ENCODE measurements at regions of chr16 and their contacts with region 1.

Region 1: DNA sequence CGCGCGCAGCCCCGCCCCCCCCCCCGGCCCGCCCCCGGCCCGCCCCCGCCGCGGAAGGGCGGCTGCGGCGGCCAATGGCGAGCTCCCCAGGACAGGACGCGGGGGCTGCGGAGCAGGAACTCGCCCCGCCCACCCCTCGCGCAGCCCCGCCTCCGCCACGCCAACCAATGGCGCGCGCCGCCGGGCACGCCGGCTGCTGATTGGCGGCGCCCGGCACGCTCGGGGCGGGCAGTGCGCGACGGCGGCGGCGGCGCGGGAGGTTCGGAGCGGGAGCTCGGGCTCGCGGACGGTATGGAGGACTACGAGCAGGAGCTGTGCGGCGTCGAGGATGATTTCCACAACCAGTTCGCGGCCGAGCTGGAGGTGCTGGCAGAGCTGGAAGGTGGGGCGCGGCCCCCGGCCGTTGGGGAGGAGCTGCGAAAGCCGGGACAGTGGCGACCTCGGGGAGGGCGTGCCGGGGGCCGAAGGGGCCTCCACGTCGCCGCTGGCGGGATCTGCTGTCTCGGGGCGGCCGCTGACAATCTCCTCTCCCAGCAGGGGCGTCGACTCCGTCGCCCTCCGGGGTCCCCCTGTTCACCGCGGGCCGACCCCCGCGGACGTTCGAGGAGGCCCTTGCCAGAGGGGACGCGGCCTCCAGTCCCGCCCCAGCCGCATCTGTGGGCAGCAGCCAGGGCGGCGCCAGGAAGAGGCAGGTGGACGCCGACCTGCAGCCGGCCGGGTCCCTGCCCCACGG is at the start of gene CHTF18:
- DNase-seq: peak; percentile 87 to 99 (median 94)
- ATAC-seq: peak; percentile 93 to 98
- H3K4me3 Mint-ChIP-seq: peak within 1 kb of the TSS; percentile 78 to 89 (median 84)
- H3K27ac Mint-ChIP-seq: peak within 1 kb of the TSS in 9 of 10 donors; percentile 44 to 86 (median 72)
- H3K4me1 Mint-ChIP-seq: peaks cover 0 to 18% (median 6%) of the 10 kb centered on the region in 4 donors
- H3K27me3 Mint-ChIP-seq: no peaks in the 10 kb centered on the region
- polyA plus RNA-seq, gene CHTF18: 3.5 to 4.3 (median 4.0) TPM

Region 2: GRCh38 chr16:714558-715476 is 73.7 kb before region 1 on chr16 and contains the start of gene METRN:
- POLR2A ChIA-PET with region 1: interaction called, 21 read pairs
- DNase-seq: peak; percentile 79 to 95 (median 85)
- ATAC-seq: peak; percentile 85 to 89
- H3K4me3 Mint-ChIP-seq: peak within 1 kb of the TSS; percentile 19 to 83 (median 64)
- H3K27ac Mint-ChIP-seq: peak within 1 kb of the TSS in 2 of 10 donors; percentile 20 to 52
- H3K4me1 Mint-ChIP-seq: peaks cover 13 to 35% (median 26%) of the 10 kb centered on the region in 4 donors
- H3K27me3 Mint-ChIP-seq: peaks cover 0 to 14% (median 0%) of the 10 kb centered on the region in 5 donors
- polyA plus RNA-seq, gene METRN: 22.1 to 40.9 (median 35.8) TPM

Region 3: GRCh38 chr16:720990-721764 is 67.4 kb before region 1 on chr16 and contains the start of gene ANTKMT:
- POLR2A ChIA-PET with region 1: interaction called, 21 read pairs
- DNase-seq: peak; percentile 66 to 83 (median 78)
- ATAC-seq: peak; percentile 71
- H3K4me3 Mint-ChIP-seq: peak within 1 kb of the TSS; percentile 79 to 95 (median 87)
- H3K27ac Mint-ChIP-seq: peak within 1 kb of the TSS; percentile 69 to 96 (median 91)
- H3K4me1 Mint-ChIP-seq: peaks cover 25 to 51% (median 38%) of the 10 kb centered on the region in 4 donors
- H3K27me3 Mint-ChIP-seq: no peaks in the 10 kb centered on the region
- polyA plus RNA-seq, gene ANTKMT: 93.5 to 128 (median 113) TPM